CD14-positive monocyte (primary cell): ENCODE measurements at regions of chr20 and their contacts with region 1.

Region 1: DNA sequence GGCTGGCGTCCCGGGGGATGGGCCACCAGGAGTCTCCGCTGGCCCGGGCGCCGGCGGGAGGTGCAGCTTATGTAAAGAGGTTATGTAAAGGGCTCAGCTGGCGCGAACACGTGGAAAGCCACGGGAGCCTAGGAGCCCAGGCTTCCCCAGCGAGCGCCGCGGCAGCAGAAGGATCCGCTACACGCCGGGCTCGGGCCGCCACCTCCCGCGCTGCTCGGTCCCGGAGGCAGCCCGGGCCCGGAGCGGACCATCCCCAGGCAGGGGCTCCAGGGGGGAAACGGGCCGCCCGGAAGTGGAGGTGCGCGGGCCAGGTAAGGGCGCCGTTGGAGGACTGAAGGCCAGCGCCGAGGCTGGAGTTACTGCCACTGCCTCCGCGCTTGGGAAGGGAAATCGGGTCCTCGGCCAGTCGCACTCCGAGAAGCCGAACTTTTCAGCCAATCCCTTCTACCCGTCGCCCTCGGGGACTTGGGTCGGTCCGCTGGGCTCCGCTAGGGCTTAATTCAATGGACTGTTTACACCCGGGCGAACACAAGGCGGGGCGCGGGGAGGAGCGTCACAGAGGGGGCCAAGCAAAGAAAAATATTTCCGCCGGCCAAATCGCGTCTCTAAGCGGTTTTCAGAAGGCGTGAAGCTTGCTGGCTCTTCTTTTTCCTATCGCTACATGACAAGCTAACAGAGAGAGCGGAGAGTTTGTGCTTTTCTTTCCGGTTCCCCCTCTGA is 398 bp downstream of the STK35 start:
- DNase-seq: peak; percentile 89 to 90 (median 89)
- H3K4me3 ChIP-seq: peak overlapping the region; percentile 72 to 92 (median 81)
- H3K4me3 Mint-ChIP-seq: peak overlapping the region; percentile 80 to 92
- H3K27ac ChIP-seq: peak overlapping the region; percentile 99 to 100
- H3K27ac Mint-ChIP-seq: peak overlapping the region; percentile 98 to 100 (median 100)
- H3K4me1 ChIP-seq: peaks cover 24 to 33% of the 10 kb centered on the region in 2 donors
- H3K4me1 Mint-ChIP-seq: peaks cover 40% of the 10 kb centered on the region
- H3K27me3 ChIP-seq: no peaks in the 10 kb centered on the region
- H3K27me3 Mint-ChIP-seq: peaks cover 0 to 2% (median 0%) of the 10 kb centered on the region in 3 donors
- CTCF ChIP-seq: no peak

Region 2: DNA sequence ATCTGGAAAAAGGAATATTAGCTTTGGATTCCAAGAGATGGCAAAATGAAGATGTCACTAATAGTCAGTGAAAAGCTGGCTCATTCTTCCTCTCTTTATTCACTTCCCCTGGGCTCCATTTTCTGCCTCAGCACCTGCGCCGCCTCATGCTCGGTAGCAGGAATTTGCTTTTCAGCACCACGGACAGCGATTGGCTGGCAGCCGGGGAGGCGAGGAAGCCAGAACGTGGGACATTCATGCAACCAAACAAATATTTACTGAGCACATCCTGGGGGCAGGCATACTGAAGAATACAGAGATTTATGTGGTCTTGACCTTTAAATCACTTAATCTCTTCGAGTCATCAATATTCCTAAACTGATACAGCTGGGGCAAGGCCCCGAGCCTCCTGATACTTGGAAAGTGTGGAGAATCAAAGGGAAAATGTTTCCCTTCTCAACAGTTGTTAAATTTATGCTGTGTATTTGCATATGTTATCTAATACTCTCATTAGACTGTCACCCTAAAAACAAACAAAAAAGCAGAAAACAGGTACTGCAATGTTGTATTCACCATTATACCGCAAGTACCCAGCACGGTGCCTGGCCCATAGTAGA is 96.1 kb before region 1 on chr20:
- intact Hi-C with region 1: loop called in 1 of 2 experiments (anchors 10 kb)
- DNase-seq: peak; percentile 44 to 60 (median 50)
- H3K4me3 ChIP-seq: no peak overlapping the region
- H3K4me3 Mint-ChIP-seq: no peak overlapping the region
- H3K27ac ChIP-seq: no peak overlapping the region
- H3K27ac Mint-ChIP-seq: no peak overlapping the region
- H3K4me1 ChIP-seq: no peaks in the 10 kb centered on the region
- H3K4me1 Mint-ChIP-seq: peaks cover 1% of the 10 kb centered on the region
- H3K27me3 ChIP-seq: peaks cover 2 to 6% of the 10 kb centered on the region in 2 donors
- H3K27me3 Mint-ChIP-seq: peaks cover 9 to 16% (median 14%) of the 10 kb centered on the region in 3 donors
- CTCF ChIP-seq: no peak

Region 3: DNA sequence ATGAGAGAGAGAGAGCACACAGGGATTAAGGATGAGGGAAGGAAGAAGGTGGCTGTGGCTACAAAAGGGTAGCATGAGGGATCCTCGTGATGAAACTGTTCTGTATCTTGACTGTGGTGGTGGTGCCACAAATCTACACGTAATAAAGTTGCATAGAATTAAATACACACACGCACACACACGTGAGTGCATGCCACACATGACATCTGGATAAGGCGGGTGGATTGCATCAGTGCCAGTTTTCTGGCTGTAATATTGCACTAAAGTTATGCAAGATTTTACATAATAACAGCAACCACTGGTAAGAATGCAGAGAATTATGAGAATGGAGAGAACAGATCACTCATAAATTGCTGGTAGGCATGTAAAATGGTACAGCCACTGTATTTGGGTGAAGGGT is 17.3 kb before region 1 on chr20:
- intact Hi-C with region 1: loop called in 1 of 2 experiments (anchors 1 kb)
- DNase-seq: peak; percentile 84 to 90 (median 86)
- H3K4me3 ChIP-seq: no peak overlapping the region
- H3K4me3 Mint-ChIP-seq: no peak overlapping the region
- H3K27ac ChIP-seq: peak overlapping the region in 1 of 2 donors; percentile 29
- H3K27ac Mint-ChIP-seq: peak overlapping the region in 4 of 7 donors; percentile 6 to 90 (median 86)
- H3K4me1 ChIP-seq: peaks cover 48 to 51% of the 10 kb centered on the region in 2 donors
- H3K4me1 Mint-ChIP-seq: peaks cover 52% of the 10 kb centered on the region
- H3K27me3 ChIP-seq: no peaks in the 10 kb centered on the region
- H3K27me3 Mint-ChIP-seq: peaks cover 3 to 9% (median 6%) of the 10 kb centered on the region in 3 donors
- CTCF ChIP-seq: no peak

Region 4: DNA sequence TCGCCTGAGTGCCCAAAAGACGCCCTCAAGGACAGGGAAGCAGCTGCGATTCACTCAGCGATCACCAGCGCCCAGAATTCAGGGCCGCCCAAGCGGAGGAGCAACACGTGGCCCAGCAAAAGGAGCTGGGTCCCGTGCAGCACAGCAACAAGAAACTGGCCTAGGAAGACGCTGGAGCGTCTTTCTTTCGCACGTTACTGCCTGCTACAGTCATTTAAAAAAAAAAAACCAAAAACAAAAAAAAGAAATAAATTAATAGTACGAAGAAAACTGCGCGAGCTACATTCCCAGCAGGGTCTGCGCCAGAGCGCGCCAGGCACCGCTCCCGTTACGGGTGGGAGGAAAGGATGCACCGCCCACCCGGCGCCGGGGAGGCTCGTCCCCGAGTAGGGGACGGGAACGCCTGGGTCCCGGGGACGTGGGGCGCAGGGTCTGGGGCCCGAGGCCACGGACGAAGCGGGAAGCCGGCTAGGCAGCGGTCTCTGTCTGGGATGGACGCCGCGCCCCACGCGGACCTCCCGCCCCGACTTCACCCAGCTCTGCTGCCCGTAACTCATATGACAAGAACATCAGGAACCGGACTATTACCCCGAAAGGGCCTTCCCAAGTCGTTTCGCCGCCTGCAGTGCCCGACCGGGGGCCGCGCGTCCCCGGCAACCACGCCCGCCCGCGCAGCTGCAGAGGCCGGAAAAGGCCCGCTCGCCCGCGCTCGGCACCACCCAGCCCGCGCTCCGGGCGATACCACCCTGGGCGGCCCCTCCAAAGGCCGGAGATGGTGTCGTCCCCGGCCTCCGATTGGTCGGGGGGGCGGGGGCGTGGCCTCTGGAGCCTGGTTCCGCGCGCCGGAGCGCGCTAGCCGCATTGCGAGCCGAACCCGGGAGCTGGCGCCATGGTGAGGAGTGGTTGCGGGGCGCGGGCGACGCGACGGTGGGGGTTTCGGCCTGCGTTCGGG is 550.0 kb after region 1 on chr20 and contains the start of gene NOP56:
- intact Hi-C with region 1: loop called in 1 of 2 experiments (anchors 5 kb)
- DNase-seq: peak; percentile 83 to 89 (median 89)
- H3K4me3 ChIP-seq: peak within 1 kb of the TSS; percentile 85 to 98 (median 89)
- H3K4me3 Mint-ChIP-seq: peak within 1 kb of the TSS; percentile 88 to 96
- H3K27ac ChIP-seq: peak within 1 kb of the TSS; percentile 33 to 77
- H3K27ac Mint-ChIP-seq: peak within 1 kb of the TSS; percentile 74 to 95 (median 84)
- H3K4me1 ChIP-seq: peaks cover 17 to 33% of the 10 kb centered on the region in 2 donors
- H3K4me1 Mint-ChIP-seq: peaks cover 17% of the 10 kb centered on the region
- H3K27me3 ChIP-seq: no peaks in the 10 kb centered on the region
- H3K27me3 Mint-ChIP-seq: no peaks in the 10 kb centered on the region
- CTCF ChIP-seq: no peak
- polyA plus RNA-seq, gene NOP56: 27.3 to 102 (median 33.1) TPM